ENCODE measurements at regions of chr2 and their contacts with region 1.

Region 1: DNA sequence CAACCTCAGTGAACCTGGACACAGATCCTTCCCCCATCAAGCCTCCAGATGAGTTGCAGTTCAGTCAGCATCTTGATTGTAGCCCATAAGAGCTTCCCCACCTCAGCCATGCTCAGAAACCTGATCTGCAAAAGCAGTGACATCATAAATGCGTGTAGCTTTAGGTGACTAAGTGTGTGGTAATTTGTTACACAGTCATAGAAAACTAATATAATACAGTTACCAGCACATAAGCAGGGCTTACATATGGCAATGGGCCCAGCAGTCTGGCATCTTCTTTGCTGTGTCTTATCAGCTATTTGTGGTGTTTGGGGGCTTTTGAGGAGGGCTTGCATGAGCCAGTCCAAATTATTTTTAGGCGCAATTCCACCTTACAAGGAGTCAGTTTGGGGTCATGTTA is 807.0 kb downstream of the SLC4A3 start:
- DNase-seq: no peak
- H3K4me3 Mint-ChIP-seq: no peak overlapping the region
- H3K27ac Mint-ChIP-seq: no peak overlapping the region
- H3K4me1 Mint-ChIP-seq: no peaks in the 10 kb centered on the region
- H3K27me3 Mint-ChIP-seq: no peaks in the 10 kb centered on the region
- CTCF ChIP-seq: no peak

Region 2: DNA sequence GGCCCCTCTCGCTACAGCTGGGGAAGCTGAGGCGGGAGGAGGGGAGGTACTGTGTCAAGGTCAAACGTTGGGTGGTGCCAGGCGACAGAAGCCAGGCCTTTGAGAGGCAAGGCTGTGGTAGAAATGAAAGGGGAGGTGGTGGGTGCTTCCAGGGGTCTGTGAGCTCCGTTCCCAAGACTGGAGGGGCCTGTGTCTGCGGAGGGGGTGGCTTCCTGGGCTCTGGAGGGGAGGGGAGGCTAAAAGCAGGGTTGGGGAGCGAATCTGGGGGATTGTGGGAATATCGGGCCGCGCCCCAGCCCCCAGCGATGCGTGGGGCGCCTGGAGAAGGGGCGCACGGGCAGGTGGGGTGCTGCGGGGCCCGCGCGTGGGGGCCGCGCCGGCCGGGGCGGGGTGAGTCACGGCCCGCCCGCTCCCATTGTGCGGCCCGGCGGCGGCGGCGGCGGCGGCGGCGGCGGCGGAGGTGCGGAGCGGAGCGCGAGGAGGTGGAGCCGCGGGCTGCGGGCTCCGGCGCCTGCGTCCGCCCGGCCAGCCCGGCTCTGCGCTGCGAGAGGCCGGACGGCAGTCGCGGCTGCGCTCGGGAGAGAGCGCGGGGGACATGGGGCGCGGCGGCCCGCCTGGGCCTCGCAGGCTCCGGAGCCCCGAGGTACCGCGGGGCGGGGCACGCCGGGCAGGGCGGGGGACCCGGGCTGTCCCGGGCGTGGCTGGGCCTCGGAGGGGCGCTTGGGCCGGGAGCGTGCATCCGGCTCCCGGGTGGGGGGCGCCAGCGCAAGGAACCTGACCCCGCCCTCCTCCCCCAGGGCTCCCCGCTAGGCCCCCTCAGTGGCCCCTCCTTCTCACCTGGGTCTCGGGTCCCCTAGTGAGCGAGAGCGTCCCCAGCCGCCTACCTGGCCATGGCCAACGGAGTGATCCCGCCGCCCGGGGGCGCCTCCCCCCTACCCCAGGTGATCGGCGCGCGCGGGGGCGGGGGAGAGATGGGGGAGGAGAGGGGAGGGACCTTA is 807.0 kb before region 1 on chr2 and contains the start of gene SLC4A3:
- CTCF ChIA-PET with region 1: no interaction called
- intact Hi-C with region 1: no loop called
- DNase-seq: peak; percentile 61
- H3K4me3 Mint-ChIP-seq: peak within 1 kb of the TSS; percentile 65
- H3K27ac Mint-ChIP-seq: peak within 1 kb of the TSS; percentile 47
- H3K4me1 Mint-ChIP-seq: peaks cover 8% of the 10 kb centered on the region
- H3K27me3 Mint-ChIP-seq: peaks cover 3% of the 10 kb centered on the region
- CTCF ChIP-seq: peak; percentile 37
- total RNA-seq, gene SLC4A3: 14.9 and 20.2 TPM in 2 replicates

Region 3: DNA sequence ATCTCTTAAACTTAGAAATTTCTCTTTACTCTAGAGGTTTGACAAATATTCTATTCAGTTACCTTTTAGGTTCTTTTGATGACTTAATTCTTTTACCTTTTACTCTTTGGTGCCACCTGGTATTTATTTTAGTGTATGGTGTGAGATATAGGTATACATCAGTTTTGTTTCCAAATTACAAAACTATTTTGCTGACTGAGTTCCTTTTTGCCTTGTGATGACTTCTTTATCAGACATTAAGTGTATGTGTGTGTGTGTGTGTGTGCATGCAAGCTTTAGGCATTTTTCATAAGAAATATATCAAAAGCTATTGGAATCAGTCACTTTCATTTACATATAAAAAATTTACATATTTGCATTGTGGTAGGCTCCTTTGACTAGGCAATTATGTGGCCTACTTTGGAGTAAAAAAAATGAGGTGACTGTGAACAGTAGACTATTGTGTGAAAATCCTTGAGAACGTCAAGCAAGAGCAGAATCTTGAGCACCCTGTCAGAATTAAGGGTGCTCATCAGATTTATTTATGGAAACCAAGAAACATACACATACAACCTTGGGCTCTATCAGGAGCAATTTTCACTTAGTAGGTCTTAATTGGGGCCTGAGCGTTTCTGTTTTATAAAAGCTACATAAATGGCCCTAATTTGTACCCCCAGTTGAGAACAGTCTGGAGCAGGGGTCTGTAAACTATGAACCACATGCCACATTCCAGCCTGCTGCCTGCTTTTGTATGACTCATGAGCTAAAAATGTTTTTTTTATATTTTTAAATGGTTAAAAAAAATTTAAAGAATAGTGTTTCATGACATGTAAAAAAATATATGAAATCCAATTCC is 391.0 kb before region 1 on chr2:
- CTCF ChIA-PET with region 1: no interaction called
- intact Hi-C with region 1: no loop called
- DNase-seq: no peak
- H3K4me3 Mint-ChIP-seq: no peak overlapping the region
- H3K27ac Mint-ChIP-seq: no peak overlapping the region
- H3K4me1 Mint-ChIP-seq: no peaks in the 10 kb centered on the region
- H3K27me3 Mint-ChIP-seq: no peaks in the 10 kb centered on the region
- CTCF ChIP-seq: no peak

Region 4: DNA sequence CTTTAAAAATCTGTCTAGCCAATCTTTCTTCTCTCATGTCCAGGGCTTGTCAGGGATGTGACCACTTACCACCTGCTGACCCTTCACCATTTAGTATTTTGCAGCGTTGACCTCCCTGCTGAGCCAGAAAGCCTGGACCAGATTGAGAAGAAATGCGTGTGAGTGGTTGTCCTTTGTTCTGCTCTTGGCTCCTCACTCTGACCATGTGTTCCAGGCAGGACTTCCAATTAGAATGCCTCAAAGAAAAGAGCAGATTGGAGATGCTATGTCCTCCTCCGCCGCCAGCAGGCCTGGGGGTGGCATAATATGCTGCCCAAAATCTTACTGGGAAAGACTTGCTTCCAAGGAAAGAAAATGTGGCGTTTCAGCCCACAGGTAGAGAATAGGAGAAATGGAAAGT is 87.2 kb after region 1 on chr2:
- CTCF ChIA-PET with region 1: interaction called, 11 read pairs
- intact Hi-C with region 1: no loop called
- DNase-seq: no peak
- H3K4me3 Mint-ChIP-seq: no peak overlapping the region
- H3K27ac Mint-ChIP-seq: no peak overlapping the region
- H3K4me1 Mint-ChIP-seq: no peaks in the 10 kb centered on the region
- H3K27me3 Mint-ChIP-seq: no peaks in the 10 kb centered on the region
- CTCF ChIP-seq: no peak